ENCODE measurements at regions of chr11 and their contacts with region 1.

Region 1: DNA sequence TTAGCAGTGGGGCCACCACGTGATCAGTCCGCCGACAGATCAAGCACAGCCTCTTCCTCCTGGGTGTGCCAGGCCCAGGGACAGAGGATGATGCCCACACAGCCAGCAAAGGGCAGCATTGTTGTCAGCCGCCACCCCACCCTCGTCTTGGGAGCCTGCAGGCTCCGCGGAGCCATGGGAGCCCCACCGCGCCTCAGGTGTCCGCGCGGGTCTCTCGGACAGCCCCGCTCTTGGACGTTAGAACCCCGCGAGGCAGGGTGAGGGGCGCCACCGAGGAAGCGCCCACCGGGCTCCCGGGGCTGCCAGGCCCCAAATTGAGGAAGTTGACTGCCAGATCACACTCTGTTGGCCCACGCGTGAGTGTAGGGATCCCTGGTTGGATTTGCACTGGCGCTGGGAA is 83.9 kb upstream of the MS4A8 start:
- DNase-seq: no peak
- H3K4me3 ChIP-seq: no peak overlapping the region
- H3K27ac ChIP-seq: no peak overlapping the region
- H3K4me1 ChIP-seq: no peaks in the 10 kb centered on the region
- H3K27me3 ChIP-seq: peaks cover 5% of the 10 kb centered on the region
- CTCF ChIP-seq: no peak

Region 2: DNA sequence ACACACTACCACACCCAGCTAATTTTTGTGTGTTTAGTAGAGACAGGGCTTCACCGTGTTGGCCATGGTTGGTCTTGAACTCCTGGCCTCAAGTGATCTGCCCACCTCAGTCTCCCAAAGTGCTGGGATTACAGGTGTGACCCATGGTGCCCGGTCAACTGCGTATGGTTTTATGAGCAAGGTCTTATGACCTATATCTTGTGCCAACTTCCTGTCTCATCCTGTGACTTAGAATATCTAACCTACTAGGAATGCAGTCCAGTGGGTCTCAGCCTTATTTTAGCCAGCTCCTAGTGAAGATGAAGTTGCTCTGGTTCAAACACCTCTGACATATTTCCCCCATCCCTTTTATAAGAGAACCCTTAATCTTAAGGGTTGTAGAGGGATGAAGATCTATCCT is 1322.9 kb before region 1 on chr11:
- CTCF ChIA-PET with region 1: no interaction called
- POLR2A ChIA-PET with region 1: no interaction called
- intact Hi-C with region 1: no loop called
- DNase-seq: no peak
- H3K4me3 ChIP-seq: no peak overlapping the region
- H3K27ac ChIP-seq: no peak overlapping the region
- H3K4me1 ChIP-seq: no peaks in the 10 kb centered on the region
- H3K27me3 ChIP-seq: peaks cover 4% of the 10 kb centered on the region
- CTCF ChIP-seq: no peak

Region 3: GRCh38 chr11:60265373-60266214 is 349.9 kb before region 1 on chr11:
- CTCF ChIA-PET with region 1: no interaction called
- POLR2A ChIA-PET with region 1: no interaction called
- intact Hi-C with region 1: loop called (anchors 5 kb)
- DNase-seq: peak; percentile 70
- H3K4me3 ChIP-seq: no peak overlapping the region
- H3K27ac ChIP-seq: no peak overlapping the region
- H3K4me1 ChIP-seq: no peaks in the 10 kb centered on the region
- H3K27me3 ChIP-seq: peaks cover 14% of the 10 kb centered on the region
- CTCF ChIP-seq: peak; percentile 74

Region 4: DNA sequence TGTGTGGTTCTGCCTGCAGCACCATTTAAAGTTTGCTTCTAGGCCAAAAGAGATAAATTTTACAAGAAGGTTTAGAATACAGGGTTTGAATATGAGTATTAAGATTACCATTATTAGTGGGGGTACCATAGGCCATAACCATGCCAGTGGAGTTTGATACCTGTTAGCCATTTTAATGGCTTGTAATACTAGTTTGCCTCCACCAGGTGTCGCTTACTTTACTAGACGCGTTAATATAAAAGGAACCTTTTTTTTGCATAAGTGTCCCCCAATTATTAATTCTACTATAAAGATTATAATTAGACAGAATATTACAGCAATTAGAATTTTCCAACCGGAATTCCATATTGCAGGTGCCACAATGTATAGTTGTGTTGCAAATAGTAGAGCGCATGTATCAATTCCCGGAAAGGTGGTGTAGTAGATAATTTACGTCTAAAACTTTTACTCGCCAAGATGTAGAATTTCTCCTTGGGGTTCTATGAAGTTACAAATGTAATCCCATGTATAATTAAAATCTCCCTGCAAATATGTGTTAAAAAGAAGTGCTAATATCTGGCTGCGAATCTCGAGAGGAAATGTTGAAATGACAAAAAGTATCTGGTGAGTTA is 272.3 kb before region 1 on chr11:
- CTCF ChIA-PET with region 1: no interaction called
- POLR2A ChIA-PET with region 1: no interaction called
- intact Hi-C with region 1: loop called (anchors 5 kb)
- DNase-seq: peak; percentile 42
- H3K4me3 ChIP-seq: no peak overlapping the region
- H3K27ac ChIP-seq: no peak overlapping the region
- H3K4me1 ChIP-seq: no peaks in the 10 kb centered on the region
- H3K27me3 ChIP-seq: no peaks in the 10 kb centered on the region
- CTCF ChIP-seq: peak; percentile 82

Region 5: GRCh38 chr11:60363542-60364510 is 251.7 kb before region 1 on chr11:
- CTCF ChIA-PET with region 1: interaction called, 11 read pairs
- POLR2A ChIA-PET with region 1: no interaction called
- intact Hi-C with region 1: loop called (anchors 1 kb)
- DNase-seq: peak; percentile 78
- H3K4me3 ChIP-seq: no peak overlapping the region
- H3K27ac ChIP-seq: no peak overlapping the region
- H3K4me1 ChIP-seq: no peaks in the 10 kb centered on the region
- H3K27me3 ChIP-seq: peaks cover 17% of the 10 kb centered on the region
- CTCF ChIP-seq: peak; percentile 84

Measured in A673 (cell line).